ENCODE measurements at regions of chr3 and their contacts with region 1.

Region 1: DNA sequence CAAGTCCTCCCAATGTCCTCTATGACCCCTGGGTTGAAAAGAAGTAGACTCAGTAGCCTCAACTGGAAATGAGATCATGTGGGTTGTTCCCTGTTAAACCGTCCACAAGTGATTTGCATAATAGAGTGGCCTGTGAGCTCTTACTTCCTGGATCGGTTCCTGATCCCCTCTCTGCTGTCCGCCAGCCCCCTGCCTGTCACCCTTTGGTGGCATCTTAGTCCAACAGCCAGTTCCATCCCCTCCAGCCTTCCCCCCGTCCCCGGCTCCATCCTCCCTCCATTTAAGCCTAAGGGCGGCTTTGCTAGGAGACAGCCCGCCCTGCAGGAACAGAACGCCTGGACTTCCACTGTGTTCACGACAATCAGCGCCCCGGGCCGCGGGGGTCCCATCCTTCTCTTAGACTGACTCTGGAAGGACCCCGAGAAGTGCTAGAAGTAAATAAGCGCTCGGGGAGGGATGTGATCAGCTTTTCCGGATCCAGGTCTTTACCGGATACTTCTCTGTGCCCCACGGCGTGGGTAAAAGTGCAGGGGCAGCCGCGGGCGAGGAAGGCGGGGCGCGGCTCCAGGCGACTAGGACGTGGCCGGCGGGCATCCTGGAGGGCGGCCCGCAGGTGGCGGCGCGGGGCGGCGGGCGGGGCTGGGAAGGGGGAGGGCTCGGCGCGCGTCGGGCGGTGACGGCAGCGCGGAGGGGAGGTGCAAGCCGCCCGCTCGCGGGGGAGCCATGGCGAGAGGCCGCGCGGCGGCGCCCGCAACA is 51.2 kb upstream of the ULK4 start:
- DNase-seq: peak; percentile 78 to 85
- ATAC-seq: peak; percentile 82 to 84 (median 83)
- H3K4me3 ChIP-seq: peak overlapping the region; percentile 95
- H3K27ac ChIP-seq: peak overlapping the region; percentile 79
- H3K4me1 ChIP-seq: peaks cover 16% of the 10 kb centered on the region
- H3K27me3 ChIP-seq: no peaks in the 10 kb centered on the region
- CTCF ChIP-seq: peak; percentile 24

Region 2: DNA sequence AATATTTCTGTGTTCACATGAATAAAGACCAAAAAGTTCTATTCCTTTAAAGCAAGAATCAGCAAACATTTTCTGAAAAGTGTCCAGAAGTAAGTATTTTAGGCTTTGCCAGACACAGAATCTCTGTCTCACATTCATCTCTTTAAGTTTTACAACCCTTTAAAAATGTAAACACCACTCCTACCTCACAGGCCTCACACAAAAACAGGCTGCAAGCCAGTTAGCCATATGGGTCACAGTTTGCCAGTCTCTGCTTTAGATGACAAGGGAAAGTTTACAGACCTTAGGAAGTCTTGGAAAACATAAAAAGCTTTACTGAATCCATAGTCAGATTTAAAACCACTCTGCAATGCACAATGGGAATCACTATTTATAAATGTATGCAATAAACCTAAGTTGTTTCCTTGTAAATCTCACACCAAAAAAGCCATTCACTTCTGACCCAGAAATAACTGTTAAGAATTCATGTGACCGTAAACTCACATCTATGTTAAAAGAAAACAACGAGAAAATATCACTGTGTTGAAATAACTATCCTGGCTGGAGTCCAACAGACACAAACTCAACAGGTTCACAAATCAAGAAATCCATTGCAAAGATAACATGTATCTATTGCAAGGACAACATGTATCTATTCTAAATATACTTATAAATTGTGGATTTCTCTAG is 359.4 kb before region 1 on chr3:
- intact Hi-C with region 1: no loop called
- DNase-seq: no peak
- ATAC-seq: no peak
- H3K4me3 ChIP-seq: no peak overlapping the region
- H3K27ac ChIP-seq: no peak overlapping the region
- H3K4me1 ChIP-seq: no peaks in the 10 kb centered on the region
- H3K27me3 ChIP-seq: no peaks in the 10 kb centered on the region
- CTCF ChIP-seq: no peak

Region 3: GRCh38 chr3:41893977-41894376 is 119.1 kb before region 1 on chr3:
- intact Hi-C with region 1: loop called (anchors 10 kb)
- DNase-seq: no peak
- ATAC-seq: peak in 1 of 4 donors; percentile 59
- H3K4me3 ChIP-seq: no peak overlapping the region
- H3K27ac ChIP-seq: no peak overlapping the region
- H3K4me1 ChIP-seq: no peaks in the 10 kb centered on the region
- H3K27me3 ChIP-seq: no peaks in the 10 kb centered on the region
- CTCF ChIP-seq: peak; percentile 60

Region 4: DNA sequence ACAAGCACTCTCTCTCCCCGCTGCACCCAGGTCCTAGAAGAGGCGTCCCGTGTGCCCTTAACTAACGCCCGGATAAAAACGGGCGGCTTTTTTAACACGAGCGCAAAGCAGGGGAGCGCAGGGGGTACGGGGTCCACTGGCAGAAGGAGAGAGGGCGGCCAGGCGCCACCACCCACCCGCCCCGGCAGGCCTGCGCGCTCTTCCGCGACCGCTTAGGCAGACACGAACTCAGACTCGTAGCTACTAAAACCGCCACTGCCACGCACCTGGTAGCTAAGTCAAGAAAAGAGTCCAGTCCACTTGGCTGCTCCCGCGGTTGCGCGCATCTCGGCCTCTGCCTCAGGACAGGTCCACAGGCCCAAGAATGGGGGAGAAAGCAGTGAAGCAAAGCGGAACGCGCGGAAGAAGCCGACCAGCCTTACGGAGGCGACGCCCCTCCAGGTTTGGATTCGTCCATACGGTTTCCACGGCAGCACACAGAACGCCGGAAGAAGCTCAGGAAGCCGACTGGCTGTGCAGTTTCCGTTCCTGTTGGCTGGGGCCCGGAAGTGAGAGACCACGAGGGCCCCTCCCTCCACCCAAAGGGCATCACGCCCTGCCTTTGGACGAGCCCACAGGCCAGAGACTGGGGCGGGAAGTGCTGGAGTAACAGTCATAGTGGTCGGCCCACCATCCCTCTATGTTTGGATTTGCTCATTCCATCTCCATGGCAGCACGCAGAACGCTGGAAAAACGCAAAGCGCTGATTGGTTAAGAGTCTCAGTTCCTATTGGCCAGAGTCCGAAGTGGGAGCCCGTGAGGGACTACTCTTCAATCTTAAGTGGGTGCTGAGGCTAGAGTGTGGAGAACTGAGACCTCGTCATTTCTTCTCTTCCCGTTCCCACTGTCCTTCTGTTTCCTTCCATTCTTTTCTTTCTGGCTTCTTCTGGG is 51.1 kb before region 1 on chr3 and contains the start of gene ULK4:
- intact Hi-C with region 1: loop called (anchors 5 kb)
- DNase-seq: peak; percentile 97 to 99
- ATAC-seq: peak; percentile 98 to 99 (median 98)
- H3K4me3 ChIP-seq: peak within 1 kb of the TSS; percentile 89
- H3K27ac ChIP-seq: peak within 1 kb of the TSS; percentile 66
- H3K4me1 ChIP-seq: peaks cover 5% of the 10 kb centered on the region
- H3K27me3 ChIP-seq: no peaks in the 10 kb centered on the region
- CTCF ChIP-seq: no peak
- total RNA-seq, gene ULK4: 0.86 to 3.2 (median 0.99) TPM

Region 5: GRCh38 chr3:42090973-42091731 is 78.0 kb after region 1 on chr3 and contains the start of gene TRAK1:
- intact Hi-C with region 1: loop called in 1 of 2 experiments (anchors 5 kb)
- DNase-seq: peak in 1 of 2 donors; percentile 59
- ATAC-seq: peak; percentile 74 to 85 (median 78)
- H3K4me3 ChIP-seq: peak within 1 kb of the TSS; percentile 57
- H3K27ac ChIP-seq: peak within 1 kb of the TSS; percentile 85
- H3K4me1 ChIP-seq: peaks cover 25% of the 10 kb centered on the region
- H3K27me3 ChIP-seq: no peaks in the 10 kb centered on the region
- CTCF ChIP-seq: no peak
- total RNA-seq, gene TRAK1: 94.8 to 128 (median 120) TPM

Region 6: DNA sequence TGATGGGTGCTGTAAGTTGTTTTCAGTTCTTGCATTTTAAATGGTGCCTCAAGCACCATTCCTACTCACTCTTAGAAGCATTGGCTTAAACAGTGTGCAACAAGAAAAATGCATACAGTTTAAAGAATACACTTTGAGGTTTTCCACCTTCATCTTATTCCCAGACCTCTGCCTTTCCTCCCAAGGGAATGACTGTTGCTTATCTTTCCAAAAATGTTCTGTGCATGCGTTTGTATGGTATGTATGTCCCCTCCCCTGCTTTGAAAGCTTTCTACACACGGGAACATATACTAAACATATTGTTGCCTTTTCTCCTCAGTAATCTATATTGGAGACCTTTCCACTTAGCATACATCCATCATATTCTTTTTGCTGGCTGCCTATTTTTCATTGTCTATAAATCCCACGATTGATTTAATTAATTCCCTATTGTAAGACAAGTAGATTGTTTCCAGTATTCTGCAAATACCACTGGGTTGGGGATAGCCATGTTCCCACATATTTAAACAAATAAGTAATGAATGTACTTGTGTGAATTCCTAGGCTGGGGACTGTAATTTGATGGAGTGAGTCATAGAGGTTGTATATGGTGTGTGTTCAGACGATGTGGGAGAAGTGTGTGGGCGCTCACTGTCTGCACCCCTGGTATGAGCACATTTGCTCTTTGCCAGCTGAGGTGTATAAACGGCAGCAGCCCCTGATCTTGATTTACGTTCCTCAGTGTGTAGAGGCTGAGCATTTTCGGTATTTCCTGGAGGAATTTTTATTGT is 83.9 kb after region 1 on chr3:
- intact Hi-C with region 1: loop called (anchors 2 to 5 kb)
- DNase-seq: no peak
- ATAC-seq: no peak
- H3K4me3 ChIP-seq: no peak overlapping the region
- H3K27ac ChIP-seq: peak overlapping the region; percentile 47
- H3K4me1 ChIP-seq: peaks cover 55% of the 10 kb centered on the region
- H3K27me3 ChIP-seq: no peaks in the 10 kb centered on the region
- CTCF ChIP-seq: no peak

Region 7: GRCh38 chr3:42190701-42191462 is 177.8 kb after region 1 on chr3:
- intact Hi-C with region 1: loop called in 1 of 2 experiments (anchors 10 kb)
- DNase-seq: peak in 1 of 2 donors; percentile 42
- ATAC-seq: peak; percentile 67 to 85 (median 74)
- H3K4me3 ChIP-seq: no peak overlapping the region
- H3K27ac ChIP-seq: no peak overlapping the region
- H3K4me1 ChIP-seq: peaks cover 14% of the 10 kb centered on the region
- H3K27me3 ChIP-seq: no peaks in the 10 kb centered on the region
- CTCF ChIP-seq: peak; percentile 86

Measured in psoas muscle (tissue), 8 donors.